ENCODE measurements at regions of chr5 and their contacts with region 1.

Region 1: DNA sequence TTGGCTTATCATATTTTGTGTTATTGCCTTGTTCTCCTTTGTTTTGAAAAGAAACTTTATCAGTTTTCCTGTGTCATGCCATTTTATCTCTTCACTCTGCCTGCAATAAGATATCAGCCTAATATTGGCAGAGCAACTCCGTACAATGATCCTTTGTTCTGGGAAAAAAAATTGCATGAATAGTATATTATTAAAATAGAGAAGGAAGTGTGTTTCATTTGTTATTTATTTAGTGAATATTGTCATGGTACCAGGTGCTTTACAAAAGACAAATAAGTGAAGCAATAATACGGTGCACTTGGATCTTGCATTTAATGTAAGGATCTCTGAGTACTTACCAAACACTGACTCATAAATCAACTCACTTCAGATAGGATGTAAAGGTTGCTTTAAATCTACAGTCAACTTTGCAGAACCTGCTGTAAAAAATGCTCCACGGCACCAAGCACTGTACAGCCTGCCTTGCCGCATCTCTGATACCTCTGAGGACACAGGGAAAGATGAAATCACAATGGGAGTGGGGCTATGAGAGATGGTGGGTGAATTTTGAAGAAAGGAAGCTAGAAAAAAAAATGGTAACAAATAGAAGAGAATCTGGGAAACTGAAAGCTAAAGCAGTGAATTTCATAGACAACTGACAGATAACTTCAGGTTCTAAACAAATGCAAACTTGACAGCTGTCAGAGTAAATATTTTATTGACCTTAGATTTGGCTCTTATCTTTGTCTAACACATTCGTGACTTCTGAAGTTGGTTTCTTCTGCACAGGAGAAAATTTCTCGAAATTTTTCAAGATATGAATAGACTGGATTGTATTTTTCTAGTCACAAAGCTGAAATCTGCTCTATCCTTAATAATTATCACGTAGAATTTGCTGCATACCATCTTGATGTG is 232.1 kb downstream of the ENC1 start:
- DNase-seq: no peak
- ATAC-seq: no peak
- H3K4me3 ChIP-seq: no peak overlapping the region
- H3K27ac ChIP-seq: peak overlapping the region; percentile 77
- H3K4me1 ChIP-seq: peaks cover 56% of the 10 kb centered on the region
- H3K27me3 ChIP-seq: no peaks in the 10 kb centered on the region
- CTCF ChIP-seq: no peak

Region 2: GRCh38 chr5:74452856-74453255 is 44.5 kb after region 1 on chr5:
- intact Hi-C with region 1: loop called in 1 of 2 experiments (anchors 5 kb)
- DNase-seq: no peak
- ATAC-seq: no peak
- H3K4me3 ChIP-seq: no peak overlapping the region
- H3K27ac ChIP-seq: no peak overlapping the region
- H3K4me1 ChIP-seq: peaks cover 9% of the 10 kb centered on the region
- H3K27me3 ChIP-seq: no peaks in the 10 kb centered on the region
- CTCF ChIP-seq: no peak

Region 3: DNA sequence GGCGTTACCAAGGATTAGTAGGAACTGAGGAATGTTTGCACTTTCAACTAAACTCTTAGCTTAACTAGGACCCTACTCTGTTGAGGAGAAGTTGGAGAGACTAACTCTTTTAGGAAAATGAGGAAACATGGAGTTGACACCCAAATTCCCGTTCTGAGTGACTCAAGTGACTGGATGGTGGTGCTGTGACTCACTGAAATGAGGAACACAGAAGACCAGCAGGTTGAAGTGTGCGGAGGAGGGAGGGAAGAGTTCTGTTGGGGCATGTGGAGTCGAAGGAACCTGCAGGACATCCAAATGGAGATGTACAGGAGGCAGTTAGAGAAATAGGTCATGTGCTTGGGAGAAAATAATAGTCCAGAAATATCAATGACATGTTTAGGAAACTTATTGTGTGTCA is 284.8 kb after region 1 on chr5:
- intact Hi-C with region 1: no loop called
- DNase-seq: no peak
- ATAC-seq: no peak
- H3K4me3 ChIP-seq: no peak overlapping the region
- H3K27ac ChIP-seq: no peak overlapping the region
- H3K4me1 ChIP-seq: no peaks in the 10 kb centered on the region
- H3K27me3 ChIP-seq: no peaks in the 10 kb centered on the region
- CTCF ChIP-seq: no peak

Measured in psoas muscle (tissue), 8 donors.